MCF 10A (cell line): ENCODE measurements at regions of chr5 and their contacts with region 1.

Region 1: DNA sequence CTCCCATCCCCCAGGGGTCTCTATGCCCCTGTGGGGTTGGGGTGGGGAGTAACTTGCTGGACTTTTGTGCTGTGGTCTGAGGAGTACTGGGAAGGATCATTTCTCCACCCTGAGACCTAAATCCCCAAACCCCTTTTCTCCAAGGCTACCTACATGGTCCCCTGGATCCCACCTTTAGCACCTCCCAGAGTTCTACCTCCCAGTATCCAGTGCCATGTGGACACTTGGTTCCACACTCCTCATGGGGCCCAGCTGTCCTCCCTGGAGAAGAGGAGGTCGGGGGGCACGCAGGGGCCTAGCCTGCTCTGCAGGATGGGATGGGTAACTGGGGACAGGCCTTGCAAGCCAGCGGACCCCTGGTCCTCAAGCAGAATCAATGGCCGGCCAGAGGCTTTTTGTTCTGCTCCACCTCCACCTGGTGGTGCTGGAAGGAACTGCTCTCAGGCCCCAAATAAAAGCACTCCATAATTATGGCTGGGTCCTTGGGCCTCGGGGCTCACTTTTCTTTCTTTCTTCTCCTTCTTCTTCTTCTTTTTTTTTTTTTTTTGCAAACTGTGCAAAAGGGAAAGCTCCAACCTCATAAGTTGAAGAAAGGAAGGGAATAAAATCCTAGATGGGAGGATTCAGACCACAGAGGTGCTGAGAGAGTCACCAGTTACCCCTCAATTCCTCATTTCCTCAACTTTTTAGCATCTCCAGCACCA is 68.4 kb downstream of the PSD2 start:
- DNase-seq: peak; percentile 73
- H3K4me3 Mint-ChIP-seq: no peak overlapping the region
- H3K27ac Mint-ChIP-seq: no peak overlapping the region
- H3K4me1 Mint-ChIP-seq: no peaks in the 10 kb centered on the region
- H3K27me3 Mint-ChIP-seq: peaks cover 22% of the 10 kb centered on the region
- CTCF ChIP-seq: peak; percentile 93

Region 2: GRCh38 chr5:139774980-139775661 is 88.9 kb before region 1 on chr5:
- CTCF ChIA-PET with region 1: interaction called, 27 read pairs
- POLR2A ChIA-PET with region 1: no interaction called
- intact Hi-C with region 1: no loop called
- DNase-seq: peak; percentile 67
- H3K4me3 Mint-ChIP-seq: no peak overlapping the region
- H3K27ac Mint-ChIP-seq: no peak overlapping the region
- H3K4me1 Mint-ChIP-seq: no peaks in the 10 kb centered on the region
- H3K27me3 Mint-ChIP-seq: peaks cover 54% of the 10 kb centered on the region
- CTCF ChIP-seq: peak; percentile 98

Region 3: GRCh38 chr5:139795074-139796001 is 68.7 kb before region 1 on chr5 and contains the start of gene PSD2:
- CTCF ChIA-PET with region 1: interaction called, 292 read pairs
- POLR2A ChIA-PET with region 1: no interaction called
- intact Hi-C with region 1: no loop called
- DNase-seq: peak; percentile 43
- H3K4me3 Mint-ChIP-seq: peak within 1 kb of the TSS; percentile 39
- H3K27ac Mint-ChIP-seq: no peak within 1 kb of the TSS
- H3K4me1 Mint-ChIP-seq: no peaks in the 10 kb centered on the region
- H3K27me3 Mint-ChIP-seq: peaks cover 76% of the 10 kb centered on the region
- CTCF ChIP-seq: no peak
- total RNA-seq, gene PSD2: not detected in 2 replicates

Region 4: DNA sequence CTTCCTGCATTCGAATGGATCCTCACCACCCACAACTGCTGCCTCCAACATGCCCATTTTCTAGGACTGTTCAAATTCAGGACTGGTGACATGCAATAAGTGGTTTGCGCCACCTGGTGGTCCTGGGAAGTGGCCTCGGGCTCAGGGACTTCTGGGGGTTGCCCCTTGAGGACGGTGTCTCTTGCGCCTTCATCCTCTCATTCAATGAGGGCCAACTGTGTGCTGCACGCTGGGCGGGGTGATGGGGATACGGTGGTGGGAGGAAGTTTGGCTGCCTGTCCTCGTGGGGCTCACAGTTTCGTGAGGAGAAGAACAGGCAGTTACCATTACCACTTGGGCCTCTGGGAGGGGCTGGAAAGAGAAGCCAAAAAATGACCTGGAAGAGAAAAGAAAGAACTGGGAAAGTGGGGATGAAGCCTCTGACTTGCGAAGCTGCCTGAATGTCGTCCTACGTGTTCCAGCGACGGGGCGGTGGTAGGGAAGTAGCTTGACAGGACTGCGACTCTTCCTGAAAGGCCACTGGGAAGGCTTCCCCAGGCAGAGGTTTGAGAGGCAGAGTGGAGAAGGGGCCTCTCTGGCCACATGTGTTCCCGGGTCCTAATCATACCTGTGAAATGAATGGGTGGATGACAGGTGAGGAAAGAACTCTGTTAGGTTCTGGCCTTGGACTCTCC is 19.4 kb before region 1 on chr5:
- CTCF ChIA-PET with region 1: interaction called, 16 read pairs
- POLR2A ChIA-PET with region 1: interaction called, 4 read pairs
- intact Hi-C with region 1: no loop called
- DNase-seq: peak; percentile 82
- H3K4me3 Mint-ChIP-seq: no peak overlapping the region
- H3K27ac Mint-ChIP-seq: no peak overlapping the region
- H3K4me1 Mint-ChIP-seq: peaks cover 3% of the 10 kb centered on the region
- H3K27me3 Mint-ChIP-seq: peaks cover 37% of the 10 kb centered on the region
- CTCF ChIP-seq: peak; percentile 74

Region 5: DNA sequence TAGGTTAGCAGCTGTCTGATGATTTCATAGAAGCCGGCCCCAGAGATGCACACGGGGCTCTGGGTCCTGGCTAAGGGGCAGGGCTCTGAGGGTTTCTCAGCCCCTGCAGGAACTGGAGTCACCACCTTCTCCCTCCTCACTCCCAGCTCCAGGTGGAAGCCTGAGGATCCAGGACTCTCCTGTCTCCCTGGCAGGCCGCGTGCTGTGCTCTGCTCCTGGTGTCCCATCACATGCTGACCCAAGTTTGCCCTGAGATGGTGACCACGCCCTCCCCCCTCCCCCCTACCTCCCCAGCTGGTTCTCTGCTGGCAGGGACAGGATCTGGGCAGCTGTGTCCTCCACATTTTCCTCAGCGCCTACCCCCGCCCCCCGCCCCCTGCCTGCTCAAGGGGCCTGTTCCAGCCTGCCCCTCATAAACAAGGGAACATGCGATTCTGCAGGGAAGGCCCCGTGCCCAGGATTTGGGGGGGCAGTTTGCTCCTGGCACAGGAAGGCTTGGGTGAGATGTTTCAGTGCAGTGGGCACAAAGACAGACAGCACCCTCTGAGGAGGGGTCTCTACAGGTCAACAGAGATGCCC is 19.0 kb after region 1 on chr5:
- CTCF ChIA-PET with region 1: interaction called, 10 read pairs
- POLR2A ChIA-PET with region 1: interaction called, 3 read pairs
- intact Hi-C with region 1: no loop called
- DNase-seq: peak; percentile 46
- H3K4me3 Mint-ChIP-seq: no peak overlapping the region
- H3K27ac Mint-ChIP-seq: no peak overlapping the region
- H3K4me1 Mint-ChIP-seq: no peaks in the 10 kb centered on the region
- H3K27me3 Mint-ChIP-seq: no peaks in the 10 kb centered on the region
- CTCF ChIP-seq: no peak

Region 6: DNA sequence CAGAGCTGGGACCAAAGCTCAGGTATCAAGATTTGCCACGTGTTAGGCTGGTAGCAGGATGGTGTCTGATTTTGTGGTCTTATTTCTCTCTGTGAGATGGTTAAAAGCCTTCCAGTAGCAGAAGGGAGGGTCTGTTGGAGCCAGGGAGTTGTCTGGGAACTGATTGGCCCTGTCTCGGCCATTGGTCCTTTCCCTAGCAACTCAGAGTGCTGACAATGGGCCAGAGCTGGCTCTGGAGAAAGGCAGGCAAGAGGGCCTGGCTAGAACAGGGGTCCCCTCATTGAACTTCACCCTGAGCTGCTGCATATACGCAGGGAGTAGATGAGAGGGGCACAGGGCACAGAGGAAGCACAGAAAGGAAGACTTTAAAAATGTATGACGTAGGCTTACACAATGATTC is 24.4 kb after region 1 on chr5:
- CTCF ChIA-PET with region 1: interaction called, 10 read pairs
- POLR2A ChIA-PET with region 1: interaction called, 3 read pairs
- intact Hi-C with region 1: no loop called
- DNase-seq: no peak
- H3K4me3 Mint-ChIP-seq: no peak overlapping the region
- H3K27ac Mint-ChIP-seq: no peak overlapping the region
- H3K4me1 Mint-ChIP-seq: no peaks in the 10 kb centered on the region
- H3K27me3 Mint-ChIP-seq: peaks cover 22% of the 10 kb centered on the region
- CTCF ChIP-seq: no peak

Region 7: DNA sequence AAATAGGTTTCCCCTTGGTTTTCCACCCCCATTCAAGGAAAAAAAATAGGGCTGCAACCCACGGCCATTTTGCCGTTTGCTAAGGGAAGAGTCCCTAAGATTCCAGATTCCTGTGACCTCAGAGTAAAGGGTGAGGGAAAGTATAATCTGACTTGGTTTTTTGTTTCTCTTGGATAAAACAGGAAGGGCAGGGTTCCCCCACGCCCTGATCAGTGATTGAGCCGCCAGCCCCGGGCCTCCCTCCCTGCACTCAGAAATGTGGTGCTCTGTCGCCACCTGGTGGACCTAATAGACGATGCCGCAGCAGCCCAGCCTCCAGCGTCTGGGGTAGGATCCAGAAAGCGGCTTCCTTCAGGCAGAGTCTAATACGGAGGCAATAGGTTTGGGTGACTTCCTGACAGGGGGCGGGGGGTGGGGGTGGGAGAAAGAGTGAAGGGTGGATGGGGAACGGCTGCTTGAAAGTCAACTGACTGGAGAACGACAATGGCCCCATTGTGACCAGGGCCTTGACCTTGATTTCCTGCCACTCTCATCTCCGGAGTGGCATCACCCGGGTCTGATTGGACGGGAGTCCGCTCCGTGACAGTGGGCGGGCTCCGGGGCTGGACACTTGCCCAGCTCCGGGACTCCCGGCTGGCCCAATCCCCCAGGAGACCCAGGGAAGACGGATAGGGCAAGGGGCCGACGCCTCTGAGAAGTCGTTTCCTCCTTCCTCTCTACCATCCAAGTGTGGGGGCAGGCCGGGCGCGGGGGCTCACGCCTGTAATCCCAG is 293.2 kb after region 1 on chr5:
- CTCF ChIA-PET with region 1: no interaction called
- POLR2A ChIA-PET with region 1: no interaction called
- intact Hi-C with region 1: loop called (anchors 5 kb)
- DNase-seq: peak; percentile 93
- H3K4me3 Mint-ChIP-seq: peak overlapping the region; percentile 62
- H3K27ac Mint-ChIP-seq: peak overlapping the region; percentile 9
- H3K4me1 Mint-ChIP-seq: peaks cover 9% of the 10 kb centered on the region
- H3K27me3 Mint-ChIP-seq: no peaks in the 10 kb centered on the region
- CTCF ChIP-seq: peak; percentile 97

Region 8: DNA sequence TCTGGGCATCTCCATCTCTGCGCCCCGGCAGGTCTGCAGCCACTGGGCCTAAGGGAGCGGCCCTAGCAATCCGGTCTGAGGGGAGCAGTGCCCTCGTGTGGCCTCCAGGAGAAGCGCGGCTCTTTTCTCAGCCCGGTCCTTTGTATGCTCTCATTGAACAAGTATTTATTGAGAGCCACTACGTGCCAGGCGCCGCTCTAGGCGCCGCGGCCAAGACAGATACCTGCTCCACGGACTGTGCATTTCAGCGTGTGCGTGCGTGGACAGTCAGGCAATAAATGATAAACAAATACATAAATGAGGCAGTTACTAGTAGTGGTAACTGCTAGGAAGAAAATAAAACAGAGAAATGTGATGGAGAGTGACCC is 493.7 kb after region 1 on chr5:
- CTCF ChIA-PET with region 1: no interaction called
- POLR2A ChIA-PET with region 1: no interaction called
- intact Hi-C with region 1: no loop called
- DNase-seq: peak; percentile 91
- H3K4me3 Mint-ChIP-seq: peak overlapping the region; percentile 33
- H3K27ac Mint-ChIP-seq: no peak overlapping the region
- H3K4me1 Mint-ChIP-seq: peaks cover 8% of the 10 kb centered on the region
- H3K27me3 Mint-ChIP-seq: no peaks in the 10 kb centered on the region
- CTCF ChIP-seq: peak; percentile 97